PC-9 (cell line): ENCODE measurements at regions of chr20 and their contacts with region 1.

Region 1: DNA sequence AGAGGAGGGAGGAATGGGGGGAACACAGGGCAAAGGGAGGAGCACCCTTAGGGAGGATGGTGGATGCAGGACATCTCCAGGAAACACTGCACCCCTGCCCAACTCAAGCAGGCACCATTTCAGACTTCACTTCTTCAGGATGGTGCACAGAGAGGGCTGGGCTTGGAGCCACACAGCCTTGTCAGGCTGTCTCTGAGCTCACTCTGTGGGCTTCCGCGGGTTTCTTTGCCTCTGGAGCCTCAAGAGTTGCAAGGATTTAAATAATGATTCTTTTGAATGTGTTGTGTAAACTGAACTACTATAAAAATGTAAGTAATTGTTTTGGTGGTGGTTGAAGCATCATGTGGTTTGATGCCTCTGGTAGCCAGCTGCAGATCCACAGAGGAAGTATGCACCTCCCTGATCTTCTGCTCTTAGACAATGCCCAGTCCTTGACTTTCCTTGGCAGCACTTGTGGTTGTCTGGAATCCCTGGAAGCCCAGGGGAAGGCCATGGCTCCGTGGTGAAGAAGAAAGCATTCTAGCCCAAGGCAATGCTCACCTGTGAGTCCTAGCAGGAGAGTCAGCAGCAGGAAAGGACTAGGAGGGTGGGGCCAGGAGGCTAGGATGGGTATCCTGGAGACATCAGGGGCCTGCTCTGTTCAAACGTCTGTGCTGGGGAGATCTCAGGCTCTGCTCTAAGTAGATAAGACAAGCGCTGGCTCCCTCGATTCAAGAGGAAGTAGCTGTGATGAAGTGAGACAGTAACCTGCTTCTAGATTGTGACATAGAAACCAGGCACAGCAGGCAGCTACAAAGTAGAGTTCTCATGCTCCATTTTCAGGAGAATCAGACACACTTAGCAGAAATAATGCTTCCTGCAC is 50.2 kb upstream of the SIRPG start:
- DNase-seq: no peak
- H3K4me3 ChIP-seq: no peak overlapping the region
- H3K27ac ChIP-seq: no peak overlapping the region
- H3K4me1 ChIP-seq: no peaks in the 10 kb centered on the region
- H3K27me3 ChIP-seq: no peaks in the 10 kb centered on the region
- CTCF ChIP-seq: no peak

Region 2: GRCh38 chr20:198225-198624 is 1509.6 kb before region 1 on chr20:
- CTCF ChIA-PET with region 1: interaction called, 12 read pairs
- POLR2A ChIA-PET with region 1: no interaction called
- intact Hi-C with region 1: no loop called
- DNase-seq: no peak
- H3K4me3 ChIP-seq: no peak overlapping the region
- H3K27ac ChIP-seq: no peak overlapping the region
- H3K4me1 ChIP-seq: no peaks in the 10 kb centered on the region
- H3K27me3 ChIP-seq: peaks cover 74% of the 10 kb centered on the region
- CTCF ChIP-seq: no peak